ENCODE measurements at regions of chr17 and their contacts with region 1.

Region 1: DNA sequence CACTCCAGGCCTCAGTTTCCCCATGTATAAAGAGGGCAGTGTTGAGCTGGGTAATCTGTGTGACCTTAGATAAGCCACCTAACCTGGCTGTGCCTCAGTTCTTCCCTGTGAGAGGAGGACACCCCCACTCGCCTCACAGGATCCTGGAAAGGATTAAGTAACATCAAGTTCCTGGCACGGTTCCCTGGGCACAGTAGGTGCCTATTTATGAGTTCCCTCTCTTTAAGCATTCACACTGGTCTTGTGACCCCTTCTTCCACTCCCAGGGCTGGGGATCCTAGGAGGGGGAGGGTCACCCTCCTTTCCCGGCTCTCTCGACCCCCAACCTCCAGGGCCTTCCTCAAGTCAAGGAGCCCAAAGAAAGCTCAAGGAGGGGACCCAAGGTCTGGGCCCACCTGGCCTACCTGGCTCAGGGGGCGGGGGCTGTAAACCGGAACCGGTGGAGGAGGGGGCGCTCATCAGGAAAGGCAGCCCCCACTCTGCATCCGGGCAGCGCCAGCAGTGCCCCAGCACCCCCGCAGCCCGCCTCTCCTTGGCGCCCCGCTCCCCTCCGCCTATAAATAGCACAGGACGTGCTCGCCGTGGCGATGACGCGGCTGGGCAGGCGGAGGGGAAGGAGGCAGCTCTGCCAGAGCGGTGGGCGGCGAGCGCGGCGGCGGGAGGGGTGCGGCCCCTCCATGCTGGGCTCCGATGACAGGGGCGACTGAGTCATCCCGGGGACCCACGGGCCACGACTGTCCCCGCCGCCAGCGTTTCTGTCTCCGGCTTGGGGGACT is 9.4 kb downstream of the RPL19 start:
- DNase-seq: peak; percentile 61
- ATAC-seq: peak; percentile 8
- H3K4me3 Mint-ChIP-seq: peak overlapping the region; percentile 64
- H3K27ac Mint-ChIP-seq: no peak overlapping the region
- H3K4me1 Mint-ChIP-seq: peaks cover 47% of the 10 kb centered on the region
- H3K27me3 Mint-ChIP-seq: peaks cover 7% of the 10 kb centered on the region
- CTCF ChIP-seq: no peak

Region 2: DNA sequence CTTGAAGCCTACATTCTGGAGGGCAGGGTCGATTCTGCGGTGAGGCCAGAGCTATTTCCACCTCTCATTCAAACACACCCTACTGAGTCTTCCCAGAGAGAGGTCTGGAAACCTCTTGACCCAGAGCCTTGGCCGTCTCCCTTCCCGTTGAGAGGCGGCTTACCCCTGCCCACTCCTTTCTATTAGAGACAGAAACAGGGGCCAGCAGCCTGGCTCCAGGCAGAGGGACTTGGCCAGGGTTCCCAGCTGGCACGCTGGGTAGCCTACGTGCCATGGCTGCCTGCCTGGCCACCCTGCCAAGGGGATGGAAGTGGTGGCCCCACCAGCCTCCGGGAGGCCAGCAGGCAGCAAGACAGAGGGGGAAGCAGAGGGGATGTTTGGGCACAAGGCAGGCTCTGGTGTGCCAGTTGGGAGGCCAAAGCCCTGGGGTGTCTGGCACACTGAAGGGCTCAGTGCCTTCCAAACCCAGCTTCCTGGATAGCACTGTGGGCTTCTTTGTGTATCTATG is 10.2 kb after region 1 on chr17:
- CTCF ChIA-PET with region 1: interaction called, 27 read pairs
- POLR2A ChIA-PET with region 1: interaction called, 3 read pairs
- DNase-seq: no peak
- ATAC-seq: no peak
- H3K4me3 Mint-ChIP-seq: no peak overlapping the region
- H3K27ac Mint-ChIP-seq: no peak overlapping the region
- H3K4me1 Mint-ChIP-seq: peaks cover 16% of the 10 kb centered on the region
- H3K27me3 Mint-ChIP-seq: peaks cover 67% of the 10 kb centered on the region
- CTCF ChIP-seq: no peak

Region 3: GRCh38 chr17:39225959-39226683 is 16.6 kb after region 1 on chr17:
- CTCF ChIA-PET with region 1: interaction called, 112 read pairs
- POLR2A ChIA-PET with region 1: interaction called, 4 read pairs
- DNase-seq: peak; percentile 98
- ATAC-seq: peak; percentile 96
- H3K4me3 Mint-ChIP-seq: peak overlapping the region; percentile 56
- H3K27ac Mint-ChIP-seq: peak overlapping the region; percentile 26; the same call in 1 of the 2 replicates
- H3K4me1 Mint-ChIP-seq: peaks cover 11% of the 10 kb centered on the region
- H3K27me3 Mint-ChIP-seq: peaks cover 45% of the 10 kb centered on the region
- CTCF ChIP-seq: no peak

Region 4: DNA sequence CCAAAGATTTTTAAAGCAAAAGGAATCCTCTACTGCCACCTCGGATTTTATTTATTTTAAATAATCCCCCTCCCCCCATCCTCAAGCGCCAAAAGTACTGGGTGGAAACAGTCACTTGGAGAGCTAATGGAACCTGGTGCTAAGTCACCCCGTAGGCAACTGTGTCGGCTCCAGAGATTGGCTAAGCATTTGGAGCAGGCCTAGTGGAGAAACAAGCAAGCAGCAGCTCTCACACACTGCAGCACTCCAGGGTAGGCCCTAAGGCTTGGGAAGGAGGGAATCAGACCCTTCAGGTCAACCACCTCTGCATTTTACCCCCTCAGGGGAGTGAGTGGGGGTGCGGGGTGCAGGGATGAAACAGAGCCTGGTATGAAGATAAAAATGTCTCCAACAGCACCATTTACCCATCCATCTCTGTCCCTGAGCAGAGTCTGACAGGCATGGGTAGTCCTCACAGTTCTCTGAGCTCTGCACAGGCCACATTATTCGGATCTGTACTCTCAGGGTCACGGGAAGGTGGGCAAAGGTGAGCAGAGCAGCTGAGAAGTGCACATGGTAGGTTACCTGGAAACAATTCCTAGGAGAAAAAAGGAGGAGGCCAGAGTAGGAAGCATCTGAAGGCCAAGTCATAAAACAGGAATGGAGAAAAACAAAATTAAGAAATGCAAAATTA is 43.4 kb after region 1 on chr17:
- CTCF ChIA-PET with region 1: interaction called, 626 read pairs
- POLR2A ChIA-PET with region 1: no interaction called
- DNase-seq: no peak
- ATAC-seq: peak; percentile 96
- H3K4me3 Mint-ChIP-seq: no peak overlapping the region
- H3K27ac Mint-ChIP-seq: peak overlapping the region; percentile 37; the same call in 1 of the 2 replicates
- H3K4me1 Mint-ChIP-seq: no peaks in the 10 kb centered on the region
- H3K27me3 Mint-ChIP-seq: no peaks in the 10 kb centered on the region; the same call in 1 of the 2 replicates
- CTCF ChIP-seq: no peak

Region 5: DNA sequence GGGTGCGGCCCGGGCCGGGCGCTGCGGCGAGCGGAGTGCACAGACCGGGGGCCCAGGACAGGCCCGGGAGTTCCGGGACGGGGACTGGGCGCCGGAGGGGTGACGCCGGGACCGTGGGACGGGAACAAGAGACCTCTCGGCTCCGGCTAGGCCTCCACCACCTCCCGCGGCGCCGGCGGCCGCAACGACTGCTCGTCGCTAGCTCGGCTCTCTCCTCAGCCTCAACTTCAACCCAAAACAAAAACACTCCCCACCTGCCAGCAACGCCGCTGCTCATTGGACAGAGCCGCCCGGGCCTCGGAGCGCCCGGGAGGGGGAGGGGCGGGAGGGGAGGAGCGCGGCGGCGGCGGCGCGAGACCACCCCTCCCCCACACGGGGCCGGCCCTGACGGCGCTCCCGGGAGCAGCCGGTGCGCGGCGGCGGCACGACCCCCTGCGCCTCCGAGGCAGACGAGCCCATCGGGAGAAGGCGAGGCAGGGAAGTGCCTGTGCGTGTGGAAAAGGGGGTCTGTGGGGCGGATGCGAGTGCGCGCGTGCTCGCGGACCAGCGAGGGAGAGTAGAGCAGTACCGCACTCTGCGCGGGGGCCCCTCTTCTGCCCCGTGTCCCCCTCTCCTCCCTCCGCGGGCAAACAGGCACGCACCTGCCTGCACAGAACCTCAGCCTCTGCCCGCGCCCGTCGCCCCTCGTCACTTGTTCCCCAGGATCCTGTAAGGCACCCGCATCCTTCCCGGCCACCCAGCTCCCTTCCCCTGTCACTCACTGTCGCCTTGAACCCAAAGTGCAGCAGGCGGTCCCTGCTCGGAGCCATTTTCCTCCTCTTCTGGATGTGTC is 192.1 kb after region 1 on chr17 and contains the start of gene FBXL20:
- CTCF ChIA-PET with region 1: interaction called, 10 read pairs
- POLR2A ChIA-PET with region 1: no interaction called
- DNase-seq: peak; percentile 92
- ATAC-seq: peak; percentile 70
- H3K4me3 Mint-ChIP-seq: peak within 1 kb of the TSS; percentile 96
- H3K27ac Mint-ChIP-seq: peak within 1 kb of the TSS; percentile 92
- H3K4me1 Mint-ChIP-seq: peaks cover 7% of the 10 kb centered on the region
- H3K27me3 Mint-ChIP-seq: peaks cover 4% of the 10 kb centered on the region
- CTCF ChIP-seq: no peak
- total RNA-seq, gene FBXL20: 9.7 to 13.8 TPM (median 13.0 TPM) in 3 replicates